ENCODE measurements at regions of chr21 and their contacts with region 1.

Region 1: GRCh38 chr21:27277110-27277509 is 310.2 kb upstream of the ADAMTS5 start:
- DNase-seq: no peak
- ATAC-seq: no peak
- H3K4me3 ChIP-seq: no peak overlapping the region
- H3K27ac ChIP-seq: no peak overlapping the region
- H3K4me1 ChIP-seq: peaks cover 0 to 10% (median 0%) of the 10 kb centered on the region in 9 donors
- H3K27me3 ChIP-seq: no peaks in the 10 kb centered on the region
- CTCF ChIP-seq: no peak

Region 2: DNA sequence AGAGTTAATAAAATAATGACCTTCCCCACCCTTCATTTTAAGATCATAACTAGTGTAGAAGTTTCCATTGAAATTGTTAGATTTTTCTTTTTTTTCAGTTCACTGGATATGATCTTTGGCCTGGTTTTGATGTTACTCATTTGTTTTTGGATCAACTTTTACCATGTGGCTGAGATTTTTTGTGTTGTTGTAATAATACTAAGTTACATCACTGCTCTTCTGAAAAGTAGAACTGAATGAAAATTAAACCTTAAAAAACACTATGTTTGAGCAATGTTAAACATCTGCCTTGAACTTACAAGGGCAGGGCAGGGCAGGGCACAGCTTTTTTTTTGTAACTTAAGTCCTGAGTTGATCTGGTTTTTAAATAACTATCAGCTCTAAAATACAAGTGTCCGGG is 105.4 kb before region 1 on chr21:
- intact Hi-C with region 1: no loop called
- DNase-seq: no peak
- ATAC-seq: peak in 7 of 8 donors; percentile 46 to 86 (median 69)
- H3K4me3 ChIP-seq: no peak overlapping the region
- H3K27ac ChIP-seq: peak overlapping the region in 4 of 10 donors; percentile 22 to 48 (median 34)
- H3K4me1 ChIP-seq: peaks cover 0 to 7% (median 0%) of the 10 kb centered on the region in 9 donors
- H3K27me3 ChIP-seq: no peaks in the 10 kb centered on the region
- CTCF ChIP-seq: no peak

Region 3: DNA sequence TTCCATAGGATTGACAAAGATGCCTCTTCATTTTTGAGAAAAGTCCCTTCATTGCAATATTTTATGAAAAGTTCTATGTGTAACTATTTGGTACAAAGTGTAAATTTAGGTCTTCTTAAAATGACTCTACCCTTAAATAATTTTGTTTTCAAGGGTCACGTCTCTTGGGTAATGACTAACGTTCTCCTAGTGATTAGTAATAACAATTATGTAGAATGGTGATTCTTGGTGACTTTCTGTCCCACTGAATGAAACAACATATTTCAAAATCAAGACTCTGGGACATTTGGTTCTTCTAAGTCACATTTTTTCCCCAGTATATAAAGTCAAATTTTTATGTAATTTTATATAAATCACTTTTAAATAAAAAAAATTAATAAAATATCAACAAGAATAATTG is 32.8 kb before region 1 on chr21:
- intact Hi-C with region 1: no loop called
- DNase-seq: no peak
- ATAC-seq: peak in 7 of 8 donors; percentile 23 to 77 (median 42)
- H3K4me3 ChIP-seq: no peak overlapping the region
- H3K27ac ChIP-seq: peak overlapping the region in 5 of 10 donors; percentile 16 to 50 (median 37)
- H3K4me1 ChIP-seq: peaks cover 0 to 8% (median 0%) of the 10 kb centered on the region in 9 donors
- H3K27me3 ChIP-seq: no peaks in the 10 kb centered on the region
- CTCF ChIP-seq: no peak

Region 4: DNA sequence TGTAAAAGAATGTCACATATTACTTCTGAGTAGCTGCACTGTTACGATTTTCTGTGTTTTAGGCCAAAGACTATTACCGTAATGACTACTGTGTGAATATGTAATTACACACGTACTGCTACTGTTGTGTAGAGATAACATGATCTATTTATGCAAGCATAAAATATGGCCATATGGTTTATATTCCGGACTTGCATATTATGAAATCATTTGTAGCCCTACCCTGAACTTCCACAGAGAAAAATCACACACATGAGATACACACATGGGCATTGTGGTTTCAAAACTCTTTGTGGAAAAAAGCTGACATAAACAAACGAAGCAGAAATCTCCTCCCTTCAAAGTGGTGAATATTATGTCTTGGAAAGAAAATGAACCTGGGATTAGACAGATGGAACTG is 62.8 kb after region 1 on chr21:
- intact Hi-C with region 1: loop called in 1 of 10 experiments (anchors 2 kb)
- DNase-seq: no peak
- ATAC-seq: no peak
- H3K4me3 ChIP-seq: no peak overlapping the region
- H3K27ac ChIP-seq: no peak overlapping the region
- H3K4me1 ChIP-seq: no peaks in the 10 kb centered on the region
- H3K27me3 ChIP-seq: no peaks in the 10 kb centered on the region
- CTCF ChIP-seq: no peak

Region 5: DNA sequence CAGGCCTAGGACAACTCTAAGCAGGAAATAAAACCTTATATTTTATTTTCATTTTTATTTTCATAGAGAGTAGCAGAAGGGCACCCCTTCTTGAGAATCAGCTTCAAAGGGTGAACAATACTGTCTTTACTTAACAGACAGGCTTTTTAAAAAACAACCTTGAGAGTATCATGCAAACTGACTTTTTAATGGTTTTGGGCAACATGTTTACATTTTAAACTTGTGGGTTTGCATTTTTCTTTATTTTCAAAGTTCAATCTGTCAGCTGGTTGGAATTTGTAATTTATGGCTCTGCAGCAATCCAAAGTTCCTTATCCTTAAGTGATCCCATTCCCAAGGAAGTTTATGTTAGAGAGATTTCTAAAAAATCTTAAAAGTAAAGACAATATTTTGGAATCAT is 82.0 kb after region 1 on chr21:
- intact Hi-C with region 1: no loop called
- DNase-seq: no peak
- ATAC-seq: no peak
- H3K4me3 ChIP-seq: no peak overlapping the region
- H3K27ac ChIP-seq: no peak overlapping the region
- H3K4me1 ChIP-seq: no peaks in the 10 kb centered on the region
- H3K27me3 ChIP-seq: no peaks in the 10 kb centered on the region
- CTCF ChIP-seq: no peak